ENCODE measurements at regions of chr20 and their contacts with region 1.

Region 1: DNA sequence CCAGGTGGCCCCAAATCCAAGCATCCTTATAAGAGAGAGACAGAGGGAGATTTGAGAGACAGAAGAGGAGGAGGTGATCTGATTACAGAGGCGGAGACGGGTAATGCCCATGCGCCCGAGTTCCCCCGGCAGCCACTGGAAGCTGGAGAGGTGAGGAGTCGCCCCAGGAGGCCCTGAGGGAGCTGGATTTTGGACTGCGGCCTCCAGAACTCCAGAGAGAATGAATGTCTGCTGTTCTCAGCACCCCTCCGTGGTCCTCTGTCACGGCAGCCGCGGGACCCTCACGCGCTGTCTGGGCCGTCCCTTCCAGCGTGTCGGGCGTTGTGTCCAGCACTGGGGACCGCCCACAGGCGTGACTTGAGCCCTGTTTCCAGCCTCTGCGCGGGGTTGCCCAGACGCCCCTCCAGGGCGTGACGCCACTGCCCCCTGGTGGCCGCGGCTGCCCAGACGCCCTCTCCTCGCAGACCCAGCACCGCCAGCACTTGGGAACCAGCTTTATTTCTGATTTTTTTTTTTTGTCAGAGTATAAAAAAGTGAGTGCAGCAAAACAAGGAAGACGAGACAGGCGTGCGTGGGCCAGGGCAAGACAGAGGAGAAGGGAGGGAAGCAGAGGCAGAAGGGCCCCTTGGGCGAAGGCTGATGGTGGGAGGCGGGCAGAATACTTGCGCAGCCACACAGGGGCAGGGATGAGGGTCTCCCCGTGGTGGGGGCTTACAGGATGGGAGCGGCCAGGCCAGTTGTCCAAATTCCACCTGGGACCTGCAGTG is 4.1 kb upstream of the ZNF512B start:
- DNase-seq: peak; percentile 84 to 94 (median 90)
- H3K4me3 ChIP-seq: peak overlapping the region in 1 of 4 donors; percentile 47
- H3K27ac ChIP-seq: peak overlapping the region in 2 of 5 donors; percentile 45 to 50
- H3K4me1 ChIP-seq: peaks cover 8 to 20% of the 10 kb centered on the region in 2 donors
- H3K27me3 ChIP-seq: no peaks in the 10 kb centered on the region
- CTCF ChIP-seq: peak; percentile 95 to 100 (median 98)
- POLR2A ChIP-seq: no peak

Region 2: GRCh38 chr20:63612276-63612928 is 361.4 kb before region 1 on chr20:
- intact Hi-C with region 1: loop called in 1 of 2 experiments (anchors 10 kb)
- DNase-seq: peak; percentile 44 to 89 (median 75)
- H3K4me3 ChIP-seq: no peak overlapping the region
- H3K27ac ChIP-seq: peak overlapping the region; percentile 42 to 87 (median 69)
- H3K4me1 ChIP-seq: peaks cover 8 to 16% of the 10 kb centered on the region in 2 donors
- H3K27me3 ChIP-seq: no peaks in the 10 kb centered on the region
- CTCF ChIP-seq: peak in 2 of 6 experiments; percentile 22 to 31
- POLR2A ChIP-seq: no peak

Region 3: DNA sequence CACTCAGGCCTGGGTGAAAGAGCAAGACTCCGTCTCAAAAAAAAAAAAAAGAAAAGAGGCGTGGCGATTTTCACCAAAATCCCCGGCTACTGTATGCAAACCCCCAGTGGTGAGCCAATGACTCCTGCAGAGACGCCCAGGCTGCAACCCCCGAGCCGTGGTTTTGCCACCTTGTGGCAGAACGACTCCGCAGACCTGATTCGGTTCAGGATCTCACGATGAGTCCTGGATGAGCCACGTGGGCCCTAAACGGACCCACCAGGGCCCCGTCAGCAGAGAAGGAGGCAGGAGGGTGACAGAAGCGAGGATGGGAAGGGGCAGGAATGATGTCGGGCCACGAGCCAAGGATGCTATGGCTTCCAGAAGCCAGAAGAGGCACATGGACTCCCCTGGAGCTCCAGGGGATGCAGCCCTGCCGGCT is 191.8 kb before region 1 on chr20:
- intact Hi-C with region 1: loop called in 1 of 2 experiments (anchors 10 kb)
- DNase-seq: no peak
- H3K4me3 ChIP-seq: no peak overlapping the region
- H3K27ac ChIP-seq: no peak overlapping the region
- H3K4me1 ChIP-seq: no peaks in the 10 kb centered on the region
- H3K27me3 ChIP-seq: no peaks in the 10 kb centered on the region
- CTCF ChIP-seq: no peak
- POLR2A ChIP-seq: no peak

Measured in adrenal gland (tissue), 19 donors.